ENCODE measurements at regions of chr6 and their contacts with region 1.

Region 1: DNA sequence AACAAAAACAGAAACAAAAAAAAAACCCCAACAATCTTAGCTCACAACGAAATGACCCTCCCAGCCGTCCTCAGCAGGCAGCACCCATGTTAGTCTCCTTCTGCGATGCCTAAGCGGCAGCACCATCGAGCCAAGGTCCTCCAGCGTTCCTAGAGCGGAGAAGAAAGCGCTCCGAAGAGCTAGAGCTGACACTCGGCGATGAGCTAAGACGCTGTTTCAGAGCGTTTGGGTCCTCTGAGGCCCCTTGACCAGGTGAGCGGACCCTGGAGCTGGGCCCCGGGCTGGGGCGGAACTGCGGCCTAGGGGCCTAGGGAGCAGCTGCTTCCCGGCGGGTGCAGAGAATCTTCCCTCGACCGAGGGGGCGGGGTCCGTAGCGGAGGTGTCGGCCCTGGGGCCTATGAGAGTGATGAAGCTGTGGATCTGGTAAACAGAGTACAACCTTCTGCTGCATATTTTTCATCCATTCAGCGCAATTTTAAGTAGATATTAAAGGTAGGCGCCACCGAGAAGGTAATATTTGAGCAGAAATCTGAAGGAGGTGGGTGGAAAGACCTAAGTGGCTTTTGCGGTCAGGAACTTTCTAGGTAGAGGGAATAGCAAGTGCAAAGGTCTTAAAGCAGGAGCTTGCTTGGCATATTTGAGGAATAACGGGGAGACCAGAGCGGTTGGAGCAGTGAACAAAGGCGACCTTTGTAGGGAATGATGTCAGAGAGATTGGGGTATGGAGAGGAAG is at the start of gene ZSCAN26:
- DNase-seq: peak; percentile 93
- H3K4me3 ChIP-seq: peak within 1 kb of the TSS; percentile 70 to 83 (median 74)
- H3K27ac ChIP-seq: peak within 1 kb of the TSS; percentile 84 to 89 (median 86)
- H3K4me1 ChIP-seq: peaks cover 17 to 32% (median 29%) of the 10 kb centered on the region in 4 donors
- H3K27me3 ChIP-seq: no peaks in the 10 kb centered on the region
- CTCF ChIP-seq: no peak
- EP300 ChIP-seq: no peak
- POLR2A ChIP-seq: no peak
- total RNA-seq, gene ZSCAN26: 15.1 to 28.2 (median 24.1) TPM

Region 2: GRCh38 chr6:28141500-28142329 is 125.4 kb before region 1 on chr6 and contains the start of gene ZKSCAN8:
- intact Hi-C with region 1: loop called (anchors 5 kb)
- DNase-seq: no peak
- H3K4me3 ChIP-seq: peak within 1 kb of the TSS; percentile 74 to 90 (median 82)
- H3K27ac ChIP-seq: peak within 1 kb of the TSS; percentile 76 to 83 (median 79)
- H3K4me1 ChIP-seq: peaks cover 36 to 50% (median 48%) of the 10 kb centered on the region in 4 donors
- H3K27me3 ChIP-seq: no peaks in the 10 kb centered on the region
- CTCF ChIP-seq: no peak
- EP300 ChIP-seq: no peak
- POLR2A ChIP-seq: no peak
- total RNA-seq, gene ZKSCAN8: 18.7 to 21.7 (median 20.8) TPM

Region 3: GRCh38 chr6:28225056-28225834 is 41.9 kb before region 1 on chr6 and contains the start of gene ZSCAN9:
- intact Hi-C with region 1: loop called (anchors 5 kb)
- DNase-seq: peak; percentile 95
- H3K4me3 ChIP-seq: peak within 1 kb of the TSS; percentile 69 to 89 (median 79)
- H3K27ac ChIP-seq: peak within 1 kb of the TSS; percentile 81 to 88 (median 84)
- H3K4me1 ChIP-seq: peaks cover 10 to 27% (median 17%) of the 10 kb centered on the region in 4 donors
- H3K27me3 ChIP-seq: peaks cover 0 to 19% (median 0%) of the 10 kb centered on the region in 4 donors
- CTCF ChIP-seq: no peak
- EP300 ChIP-seq: no peak
- POLR2A ChIP-seq: no peak
- total RNA-seq, gene ZSCAN9: 11.4 to 15.4 (median 12.0) TPM

Region 4: DNA sequence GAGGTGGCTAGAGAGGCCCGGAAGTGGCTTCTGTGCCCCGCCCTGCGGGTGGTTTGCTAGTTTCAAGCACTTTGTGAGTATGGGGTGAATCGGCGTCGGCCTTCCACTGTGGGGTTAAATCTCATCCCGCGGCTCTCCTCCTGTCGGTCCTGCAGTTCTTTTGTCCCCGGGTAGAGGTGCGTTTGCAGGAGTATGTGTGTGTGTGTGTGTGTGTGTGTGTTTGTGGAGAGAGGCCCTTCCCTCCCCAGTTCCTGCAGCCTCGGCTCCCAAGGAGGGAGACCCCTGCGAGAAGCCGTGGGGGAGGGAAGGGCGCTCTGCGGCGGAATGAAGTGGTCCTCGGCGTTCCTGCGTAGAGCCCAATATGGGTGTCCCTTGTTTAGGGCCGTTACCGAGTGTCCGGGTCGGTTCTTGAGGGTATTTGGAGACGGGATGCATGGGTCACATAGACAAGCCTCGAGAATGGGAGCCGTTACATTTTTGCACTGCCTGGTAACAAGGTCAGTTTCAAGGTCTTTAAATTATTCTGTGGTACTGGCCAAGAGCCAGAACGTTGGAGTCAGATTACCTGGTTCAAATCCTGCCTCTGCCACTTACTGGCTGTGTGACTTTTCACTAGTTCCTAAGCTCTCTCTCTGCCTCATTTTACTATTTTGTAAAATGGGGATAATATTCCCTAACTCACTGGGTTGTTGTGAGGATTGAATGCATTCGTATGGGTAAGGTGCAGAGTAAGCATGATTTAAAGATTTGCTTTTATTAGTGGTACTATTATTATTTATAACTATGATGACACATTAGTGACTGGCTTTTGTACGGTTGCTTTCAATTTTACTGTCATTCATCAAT is 83.0 kb after region 1 on chr6 and contains the start of gene ZKSCAN3:
- intact Hi-C with region 1: loop called (anchors 5 kb)
- DNase-seq: peak; percentile 93
- H3K4me3 ChIP-seq: peak within 1 kb of the TSS; percentile 75 to 78 (median 76)
- H3K27ac ChIP-seq: peak within 1 kb of the TSS; percentile 76 to 89 (median 84)
- H3K4me1 ChIP-seq: peaks cover 25 to 38% (median 34%) of the 10 kb centered on the region in 4 donors
- H3K27me3 ChIP-seq: no peaks in the 10 kb centered on the region
- CTCF ChIP-seq: no peak
- EP300 ChIP-seq: no peak
- POLR2A ChIP-seq: no peak
- total RNA-seq, gene ZKSCAN3: 2.8 to 10.4 (median 6.4) TPM

Measured in esophagus muscularis mucosa (tissue), 4 donors.